Activated naive CD4-positive, alpha-beta T cell treated with anti-CD3 and anti-CD28 coated beads for 36 hours (primary cell): ENCODE measurements at regions of chr14 and their contacts with region 1.

Region 1: DNA sequence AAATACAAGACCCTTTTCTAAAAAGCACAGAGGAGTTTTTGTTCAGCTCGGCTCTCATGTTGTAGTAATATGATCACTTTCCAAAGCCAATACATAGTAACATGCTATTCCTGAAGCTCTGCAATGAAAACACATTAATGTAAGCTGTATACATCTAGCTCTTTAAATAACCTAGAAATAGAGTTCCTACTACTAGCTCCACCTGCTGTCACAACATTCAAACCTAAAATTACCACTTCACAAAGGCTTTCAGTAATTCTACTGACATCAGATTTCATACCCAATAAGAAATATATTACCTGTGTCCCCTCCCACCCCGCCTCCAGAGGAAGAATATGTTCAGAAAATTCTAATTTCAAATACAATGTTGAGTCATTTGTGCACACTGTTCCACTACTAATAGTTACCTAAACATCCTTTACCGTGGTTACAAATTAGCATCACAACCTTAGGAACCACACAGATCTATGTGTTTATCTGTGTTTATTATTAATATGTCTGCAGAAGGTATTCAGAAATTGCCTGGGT is 17.8 kb downstream of the EFCAB11 start:
- DNase-seq: no peak
- H3K4me3 Mint-ChIP-seq: no peak overlapping the region
- H3K27ac Mint-ChIP-seq: no peak overlapping the region
- H3K4me1 Mint-ChIP-seq: peaks cover under 1% of the 10 kb centered on the region
- H3K27me3 Mint-ChIP-seq: no peaks in the 10 kb centered on the region

Region 2: GRCh38 chr14:89813617-89814031 is 123.1 kb before region 1 on chr14:
- CTCF ChIA-PET with region 1: no interaction called
- intact Hi-C with region 1: no loop called
- DNase-seq: no peak
- H3K4me3 Mint-ChIP-seq: no peak overlapping the region
- H3K27ac Mint-ChIP-seq: no peak overlapping the region
- H3K4me1 Mint-ChIP-seq: no peaks in the 10 kb centered on the region
- H3K27me3 Mint-ChIP-seq: no peaks in the 10 kb centered on the region

Region 3: DNA sequence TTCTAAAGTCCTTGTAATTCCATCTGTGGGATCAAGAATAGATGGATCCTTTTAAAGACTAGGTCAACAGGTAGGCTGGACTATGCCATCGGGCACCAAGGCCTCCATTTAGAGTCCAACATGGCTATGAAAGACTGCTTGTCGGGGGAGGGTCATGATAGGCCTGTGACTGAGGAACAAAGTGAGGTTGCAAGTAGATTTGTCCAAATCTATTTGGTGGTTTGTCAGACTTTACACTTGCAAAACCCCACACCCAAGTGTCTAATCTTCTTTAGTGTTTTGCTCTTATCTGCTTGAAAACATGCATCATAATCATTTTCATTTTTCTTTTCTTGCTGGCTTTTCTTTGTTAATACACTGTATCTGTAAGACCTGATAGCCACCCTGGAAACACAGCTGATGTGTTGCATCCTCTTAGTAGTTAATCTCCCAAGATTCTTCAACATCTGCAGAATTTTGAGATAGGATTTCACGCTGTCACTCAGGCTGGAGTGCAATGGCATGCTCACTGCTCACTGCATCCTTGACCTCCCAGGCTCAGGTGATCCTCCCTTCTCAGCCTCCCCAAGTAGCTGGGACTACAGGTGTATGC is 69.3 kb after region 1 on chr14:
- CTCF ChIA-PET with region 1: interaction called, 10 read pairs
- intact Hi-C with region 1: no loop called
- DNase-seq: no peak
- H3K4me3 Mint-ChIP-seq: no peak overlapping the region
- H3K27ac Mint-ChIP-seq: no peak overlapping the region
- H3K4me1 Mint-ChIP-seq: peaks cover 15% of the 10 kb centered on the region
- H3K27me3 Mint-ChIP-seq: no peaks in the 10 kb centered on the region

Region 4: DNA sequence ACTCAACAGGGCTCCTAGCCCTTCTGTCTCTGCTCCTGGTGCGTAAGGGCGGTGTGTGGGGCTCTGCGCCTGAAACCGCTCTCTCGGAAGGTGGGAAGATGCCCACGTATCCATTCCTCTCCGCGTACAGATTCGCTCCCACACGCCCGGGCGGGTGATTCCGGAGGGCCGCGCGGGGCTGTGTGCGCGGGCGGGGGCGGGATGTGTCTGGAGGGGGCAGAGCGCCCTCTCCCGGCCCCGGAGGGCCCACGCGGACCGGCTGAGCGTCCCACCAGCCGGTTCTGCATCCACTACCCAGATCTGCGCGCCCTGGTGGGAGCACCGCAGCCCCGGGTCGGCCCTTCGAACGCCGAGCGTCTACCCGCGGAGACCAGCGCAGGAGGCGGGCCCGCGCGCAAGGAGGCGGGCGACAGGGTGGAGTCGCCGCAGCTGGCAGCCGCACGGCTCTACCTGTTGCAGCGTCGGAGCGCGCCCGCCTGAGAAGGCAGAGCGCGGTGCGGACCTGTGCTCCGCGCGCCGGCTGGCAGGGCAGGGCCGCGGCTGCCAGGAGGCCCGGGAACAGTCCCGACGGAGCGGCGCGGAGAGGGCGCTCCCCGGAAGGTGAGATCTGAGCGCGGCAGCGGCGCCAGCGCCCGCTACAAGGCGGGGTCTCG is 123.7 kb after region 1 on chr14:
- CTCF ChIA-PET with region 1: interaction called, 10 read pairs
- intact Hi-C with region 1: loop called (anchors 1 kb)
- DNase-seq: peak; percentile 49
- H3K4me3 Mint-ChIP-seq: peak overlapping the region; percentile 72
- H3K27ac Mint-ChIP-seq: no peak overlapping the region
- H3K4me1 Mint-ChIP-seq: peaks cover 14% of the 10 kb centered on the region
- H3K27me3 Mint-ChIP-seq: peaks cover 54% of the 10 kb centered on the region

Region 5: GRCh38 chr14:90235179-90235976 is 298.7 kb after region 1 on chr14:
- CTCF ChIA-PET with region 1: interaction called, 20 read pairs
- intact Hi-C with region 1: loop called (anchors 1 kb)
- DNase-seq: peak; percentile 82
- H3K4me3 Mint-ChIP-seq: no peak overlapping the region
- H3K27ac Mint-ChIP-seq: no peak overlapping the region
- H3K4me1 Mint-ChIP-seq: peaks cover 2% of the 10 kb centered on the region
- H3K27me3 Mint-ChIP-seq: peaks cover 2% of the 10 kb centered on the region